ENCODE measurements at regions of chrX and their contacts with region 1.

Region 1: DNA sequence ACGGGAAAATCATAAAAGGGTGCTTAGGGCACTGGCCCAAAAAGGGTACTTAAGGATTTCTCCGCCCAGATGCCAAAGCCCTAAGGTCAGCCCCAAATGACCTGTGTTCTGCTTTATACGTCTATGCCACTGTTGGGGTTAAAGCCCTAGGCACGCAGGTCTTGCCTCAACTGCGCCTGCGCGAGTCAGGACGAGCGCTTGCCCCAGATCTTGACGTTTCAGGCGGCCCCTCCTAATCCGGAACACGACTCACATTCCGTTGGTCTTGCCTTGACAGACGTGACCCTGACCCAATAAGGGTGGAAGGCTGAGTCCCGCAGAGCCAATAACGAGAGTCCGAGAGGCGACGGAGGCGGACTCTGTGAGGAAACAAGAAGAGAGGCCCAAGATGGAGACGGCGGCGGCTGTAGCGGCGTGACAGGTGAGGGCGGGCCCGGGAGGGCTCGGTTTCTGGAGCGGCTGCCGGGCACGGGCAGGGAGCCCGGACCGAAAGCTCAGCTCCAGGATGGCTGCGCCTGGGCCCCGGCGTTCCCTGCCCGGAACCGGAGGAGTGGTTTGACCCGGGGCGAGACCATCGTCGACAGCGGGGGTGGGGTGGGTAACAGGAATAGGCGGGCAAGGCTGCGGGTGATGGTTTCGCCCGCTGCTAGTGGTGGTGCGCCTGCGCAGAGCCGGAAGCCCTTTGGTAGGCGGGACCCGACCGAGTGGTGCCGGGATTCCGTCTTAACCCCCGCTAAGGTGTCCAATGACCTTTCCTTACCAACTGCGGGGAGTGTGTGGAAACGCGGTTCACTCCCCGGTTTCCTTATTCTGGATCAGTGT is at the start of gene ARAF:
- DNase-seq: peak; percentile 96 to 99 (median 99)
- H3K4me3 ChIP-seq: peak within 1 kb of the TSS; percentile 71 to 81 (median 75)
- H3K4me3 Mint-ChIP-seq: peak within 1 kb of the TSS; percentile 82 to 90
- H3K27ac ChIP-seq: peak within 1 kb of the TSS; percentile 86 to 88
- H3K27ac Mint-ChIP-seq: peak within 1 kb of the TSS; percentile 93 to 98 (median 97)
- H3K4me1 ChIP-seq: peaks cover 32 to 45% of the 10 kb centered on the region in 2 donors
- H3K4me1 Mint-ChIP-seq: peaks cover 43% of the 10 kb centered on the region
- H3K27me3 ChIP-seq: no peaks in the 10 kb centered on the region
- H3K27me3 Mint-ChIP-seq: peaks cover 0 to 9% (median 0%) of the 10 kb centered on the region in 3 donors
- CTCF ChIP-seq: no peak
- polyA plus RNA-seq, gene ARAF: 49.7 to 105 (median 68.6) TPM

Region 2: GRCh38 chrX:47605024-47605423 is 44.0 kb after region 1 on chrX:
- intact Hi-C with region 1: no loop called
- DNase-seq: peak; percentile 16 to 55 (median 23)
- H3K4me3 ChIP-seq: no peak overlapping the region
- H3K4me3 Mint-ChIP-seq: no peak overlapping the region
- H3K27ac ChIP-seq: no peak overlapping the region
- H3K27ac Mint-ChIP-seq: peak overlapping the region in 1 of 7 donors; percentile 51
- H3K4me1 ChIP-seq: peaks cover 34 to 38% of the 10 kb centered on the region in 2 donors
- H3K4me1 Mint-ChIP-seq: peaks cover 29% of the 10 kb centered on the region
- H3K27me3 ChIP-seq: no peaks in the 10 kb centered on the region
- H3K27me3 Mint-ChIP-seq: peaks cover 0 to 5% (median 2%) of the 10 kb centered on the region in 3 donors
- CTCF ChIP-seq: no peak

Region 3: DNA sequence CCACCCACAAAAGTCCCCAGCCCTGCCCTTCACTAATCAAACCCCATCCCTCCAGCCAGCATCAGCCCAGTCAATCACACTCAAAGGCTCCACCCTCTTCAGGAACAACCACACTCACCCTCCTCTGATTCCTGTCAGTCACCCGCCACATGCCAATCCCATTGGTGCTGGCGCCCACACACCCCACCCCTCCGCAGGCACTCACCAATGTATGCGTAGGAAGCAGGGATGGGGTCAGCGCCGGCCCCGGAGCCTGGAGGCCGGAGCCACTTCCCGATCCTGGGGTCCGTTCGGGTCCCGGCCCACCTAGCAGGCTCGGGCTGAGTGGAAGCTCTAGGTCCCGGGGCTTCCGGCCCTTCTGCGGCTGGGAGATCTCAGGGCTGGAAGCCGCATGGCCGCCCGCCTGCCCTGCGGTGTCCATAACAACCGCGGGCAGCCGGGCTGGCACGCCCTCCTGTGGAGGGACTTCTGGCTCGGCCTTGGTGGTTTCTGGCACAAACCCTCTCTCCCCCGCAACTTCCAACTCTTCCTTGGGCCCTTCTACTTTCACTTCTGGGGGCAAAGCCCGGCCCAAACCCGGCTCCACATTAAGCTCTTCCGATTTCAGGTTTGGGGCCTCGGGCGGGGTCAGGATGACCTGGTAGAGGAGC is 76.6 kb after region 1 on chrX:
- intact Hi-C with region 1: loop called (anchors 5 kb)
- DNase-seq: peak; percentile 74 to 80 (median 75)
- H3K4me3 ChIP-seq: peak overlapping the region; percentile 18 to 73 (median 61)
- H3K4me3 Mint-ChIP-seq: peak overlapping the region; percentile 74 to 83
- H3K27ac ChIP-seq: peak overlapping the region; percentile 53 to 75
- H3K27ac Mint-ChIP-seq: peak overlapping the region; percentile 84 to 93 (median 88)
- H3K4me1 ChIP-seq: peaks cover 53 to 54% of the 10 kb centered on the region in 2 donors
- H3K4me1 Mint-ChIP-seq: peaks cover 23% of the 10 kb centered on the region
- H3K27me3 ChIP-seq: no peaks in the 10 kb centered on the region
- H3K27me3 Mint-ChIP-seq: peaks cover 0 to 3% (median 2%) of the 10 kb centered on the region in 3 donors
- CTCF ChIP-seq: peak; percentile 49

Region 4: GRCh38 chrX:47644557-47645091 is 83.6 kb after region 1 on chrX:
- intact Hi-C with region 1: loop called (anchors 5 kb)
- DNase-seq: peak in 2 of 3 donors; percentile 10 to 32
- H3K4me3 ChIP-seq: no peak overlapping the region
- H3K4me3 Mint-ChIP-seq: peak overlapping the region in 1 of 2 donors; percentile 37
- H3K27ac ChIP-seq: no peak overlapping the region
- H3K27ac Mint-ChIP-seq: peak overlapping the region in 4 of 7 donors; percentile 1 to 57 (median 42)
- H3K4me1 ChIP-seq: peaks cover 20 to 23% of the 10 kb centered on the region in 2 donors
- H3K4me1 Mint-ChIP-seq: peaks cover 30% of the 10 kb centered on the region
- H3K27me3 ChIP-seq: no peaks in the 10 kb centered on the region
- H3K27me3 Mint-ChIP-seq: peaks cover 0 to 1% (median 0%) of the 10 kb centered on the region in 3 donors
- CTCF ChIP-seq: no peak

Region 5: GRCh38 chrX:47650164-47651042 is 89.4 kb after region 1 on chrX and contains the start of gene ELK1:
- intact Hi-C with region 1: loop called in 1 of 2 experiments (anchors 5 kb)
- DNase-seq: peak; percentile 90 to 93 (median 92)
- H3K4me3 ChIP-seq: peak within 1 kb of the TSS; percentile 55 to 80 (median 65)
- H3K4me3 Mint-ChIP-seq: peak within 1 kb of the TSS; percentile 83 to 92
- H3K27ac ChIP-seq: peak within 1 kb of the TSS; percentile 60 to 76
- H3K27ac Mint-ChIP-seq: peak within 1 kb of the TSS; percentile 88 to 95 (median 94)
- H3K4me1 ChIP-seq: peaks cover 23 to 27% of the 10 kb centered on the region in 2 donors
- H3K4me1 Mint-ChIP-seq: peaks cover 25% of the 10 kb centered on the region
- H3K27me3 ChIP-seq: no peaks in the 10 kb centered on the region
- H3K27me3 Mint-ChIP-seq: peaks cover 0 to 3% (median 2%) of the 10 kb centered on the region in 3 donors
- CTCF ChIP-seq: no peak
- polyA plus RNA-seq, gene ELK1: 9.5 to 11.9 (median 10.7) TPM

Region 6: GRCh38 chrX:48021026-48021900 is 460.2 kb after region 1 on chrX:
- intact Hi-C with region 1: loop called in 1 of 2 experiments (anchors 5 kb)
- DNase-seq: peak; percentile 53 to 79 (median 72)
- H3K4me3 ChIP-seq: peak overlapping the region; percentile 80 to 85 (median 83)
- H3K4me3 Mint-ChIP-seq: peak overlapping the region; percentile 82 to 91
- H3K27ac ChIP-seq: peak overlapping the region; percentile 66 to 94
- H3K27ac Mint-ChIP-seq: peak overlapping the region; percentile 91 to 99 (median 96)
- H3K4me1 ChIP-seq: peaks cover 15 to 16% of the 10 kb centered on the region in 2 donors
- H3K4me1 Mint-ChIP-seq: peaks cover 11% of the 10 kb centered on the region
- H3K27me3 ChIP-seq: no peaks in the 10 kb centered on the region
- H3K27me3 Mint-ChIP-seq: peaks cover 0 to 2% (median 0%) of the 10 kb centered on the region in 3 donors
- CTCF ChIP-seq: no peak